Endothelial cell of umbilical vein (primary cell): ENCODE measurements at regions of chr16 and their contacts with region 1.

Region 1: GRCh38 chr16:74862741-74863244 is 88.2 kb upstream of the FA2H start:
- DNase-seq: peak; percentile 61
- H3K4me3 ChIP-seq: no peak overlapping the region
- H3K27ac ChIP-seq: no peak overlapping the region
- H3K4me1 ChIP-seq: peaks cover 3% of the 10 kb centered on the region
- H3K27me3 ChIP-seq: peaks cover 0 to 1% of the 10 kb centered on the region in 2 experiments
- CTCF ChIP-seq: peak; percentile 54 to 59
- POLR2A ChIP-seq: no peak

Region 2: GRCh38 chr16:74666425-74667254 is 196.2 kb before region 1 on chr16 and contains the start of gene RFWD3:
- CTCF ChIA-PET with region 1: interaction called, 14 read pairs
- POLR2A ChIA-PET with region 1: no interaction called
- dilution Hi-C with region 1: no loop called
- intact Hi-C with region 1: no loop called
- DNase-seq: peak; percentile 98
- H3K4me3 ChIP-seq: peak within 1 kb of the TSS; percentile 84 to 95 (median 88)
- H3K27ac ChIP-seq: peak within 1 kb of the TSS; percentile 62
- H3K4me1 ChIP-seq: peaks cover 4% of the 10 kb centered on the region
- H3K27me3 ChIP-seq: no peaks in the 10 kb centered on the region
- CTCF ChIP-seq: peak in 1 of 2 donors; percentile 0
- POLR2A ChIP-seq: peak; percentile 88
- total RNA-seq, gene RFWD3: 47.6 and 51.6 TPM in 2 replicates

Region 3: DNA sequence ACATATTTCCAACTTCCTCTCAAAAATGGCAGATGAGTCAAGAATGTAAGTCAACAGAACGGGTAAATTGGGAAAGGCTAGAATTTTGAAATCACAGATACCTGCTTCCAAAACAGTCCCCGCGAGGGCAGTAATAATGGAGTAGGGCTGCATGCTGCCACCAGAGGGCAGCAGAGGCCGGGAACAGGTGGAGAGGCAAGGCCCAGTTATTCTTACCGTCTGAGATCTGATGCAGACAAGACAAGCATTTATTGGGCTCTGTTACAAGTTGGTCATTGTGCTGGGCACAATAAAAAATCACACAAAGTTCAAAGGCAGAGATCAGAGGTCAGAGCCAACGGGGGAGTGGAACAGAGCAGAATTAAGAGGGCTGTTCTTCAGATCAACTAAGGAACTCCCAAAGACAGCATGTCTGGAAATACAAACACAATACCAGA is 153.3 kb before region 1 on chr16:
- CTCF ChIA-PET with region 1: interaction called, 164 read pairs
- POLR2A ChIA-PET with region 1: interaction called, 3 read pairs
- dilution Hi-C with region 1: no loop called
- intact Hi-C with region 1: loop called (anchors 1 kb)
- DNase-seq: peak; percentile 82
- H3K4me3 ChIP-seq: no peak overlapping the region
- H3K27ac ChIP-seq: no peak overlapping the region
- H3K4me1 ChIP-seq: no peaks in the 10 kb centered on the region
- H3K27me3 ChIP-seq: no peaks in the 10 kb centered on the region
- CTCF ChIP-seq: peak; percentile 94 to 96
- POLR2A ChIP-seq: no peak

Region 4: DNA sequence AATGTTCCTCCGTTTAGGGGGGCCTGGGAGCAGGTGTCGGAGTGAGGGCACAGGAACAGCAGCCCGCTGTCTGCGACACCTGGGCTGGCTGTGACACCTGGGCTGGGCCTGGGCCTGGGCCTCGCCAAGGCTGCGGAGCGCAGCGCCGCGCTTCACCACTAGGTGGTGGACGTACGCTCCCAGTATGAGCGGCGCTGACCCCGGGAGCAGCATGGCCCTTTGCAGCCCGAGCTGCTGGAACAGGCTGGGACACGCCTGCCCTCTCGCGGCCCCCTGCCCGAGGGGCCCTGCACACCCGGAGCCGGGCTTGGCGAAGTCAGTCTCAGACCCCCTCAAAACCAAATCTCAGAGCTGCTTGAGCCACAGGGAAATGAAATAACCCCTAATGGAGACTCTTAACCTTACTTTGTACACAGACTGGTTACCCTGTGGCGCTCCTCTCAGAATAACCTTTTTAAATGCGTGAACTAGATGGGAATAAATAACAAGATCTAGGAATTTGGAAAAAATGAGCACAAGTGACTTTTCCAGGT is 49.6 kb before region 1 on chr16:
- CTCF ChIA-PET with region 1: interaction called, 144 read pairs
- POLR2A ChIA-PET with region 1: no interaction called
- dilution Hi-C with region 1: no loop called
- intact Hi-C with region 1: loop called (anchors 1 kb)
- DNase-seq: peak; percentile 61
- H3K4me3 ChIP-seq: no peak overlapping the region
- H3K27ac ChIP-seq: no peak overlapping the region
- H3K4me1 ChIP-seq: no peaks in the 10 kb centered on the region
- H3K27me3 ChIP-seq: peaks cover 0 to 8% of the 10 kb centered on the region in 2 experiments
- CTCF ChIP-seq: peak; percentile 97 to 98
- POLR2A ChIP-seq: no peak

Region 5: GRCh38 chr16:74846714-74847113 is 16.1 kb before region 1 on chr16:
- CTCF ChIA-PET with region 1: interaction called, 24 read pairs
- POLR2A ChIA-PET with region 1: no interaction called
- dilution Hi-C with region 1: no loop called
- intact Hi-C with region 1: no loop called
- DNase-seq: no peak
- H3K4me3 ChIP-seq: no peak overlapping the region
- H3K27ac ChIP-seq: no peak overlapping the region
- H3K4me1 ChIP-seq: no peaks in the 10 kb centered on the region
- H3K27me3 ChIP-seq: peaks cover 0 to 3% of the 10 kb centered on the region in 2 experiments
- CTCF ChIP-seq: no peak
- POLR2A ChIP-seq: no peak

Region 6: DNA sequence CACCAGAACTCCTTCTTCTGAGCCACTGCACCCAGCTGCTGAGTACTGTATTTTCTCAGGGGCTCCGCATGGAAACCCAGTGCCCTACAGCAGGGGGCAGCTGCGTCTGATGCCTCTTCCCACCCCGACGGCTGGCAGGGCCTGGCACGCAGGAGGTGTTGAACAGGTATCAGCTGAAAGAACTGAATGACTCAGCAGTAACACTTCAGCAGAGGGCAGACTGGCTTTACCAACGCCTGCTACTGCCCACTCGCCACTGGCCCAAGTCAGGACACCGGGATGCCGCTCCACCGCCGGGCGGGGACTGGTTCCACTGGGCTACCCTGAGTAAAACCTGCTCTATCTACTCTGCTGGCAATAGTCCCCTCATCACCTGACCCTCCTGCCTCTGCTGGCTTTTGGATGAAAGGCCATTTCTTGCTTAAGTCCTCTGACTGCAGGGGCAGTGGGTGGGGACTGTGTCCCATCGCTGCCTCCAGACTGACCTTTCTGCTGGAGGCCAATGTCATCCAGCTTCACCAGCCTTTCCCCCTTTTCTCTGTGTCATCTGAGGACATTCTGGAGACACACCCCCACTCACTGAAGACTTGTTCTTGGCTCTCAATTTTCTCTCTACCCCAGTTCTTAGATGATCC is 12.2 kb after region 1 on chr16:
- CTCF ChIA-PET with region 1: interaction called, 29 read pairs
- POLR2A ChIA-PET with region 1: interaction called, 3 read pairs
- dilution Hi-C with region 1: no loop called
- intact Hi-C with region 1: no loop called
- DNase-seq: no peak
- H3K4me3 ChIP-seq: no peak overlapping the region
- H3K27ac ChIP-seq: no peak overlapping the region
- H3K4me1 ChIP-seq: no peaks in the 10 kb centered on the region
- H3K27me3 ChIP-seq: no peaks in the 10 kb centered on the region
- CTCF ChIP-seq: no peak
- POLR2A ChIP-seq: no peak

Region 7: GRCh38 chr16:75087375-75087979 is 224.7 kb after region 1 on chr16:
- CTCF ChIA-PET with region 1: no interaction called
- POLR2A ChIA-PET with region 1: no interaction called
- dilution Hi-C with region 1: no loop called
- intact Hi-C with region 1: no loop called
- DNase-seq: peak; percentile 96
- H3K4me3 ChIP-seq: no peak overlapping the region
- H3K27ac ChIP-seq: peak overlapping the region; percentile 45
- H3K4me1 ChIP-seq: peaks cover 26% of the 10 kb centered on the region
- H3K27me3 ChIP-seq: no peaks in the 10 kb centered on the region
- CTCF ChIP-seq: no peak
- POLR2A ChIP-seq: peak; percentile 71